ENCODE measurements at regions of chr12 and their contacts with region 1.

Region 1: GRCh38 chr12:8544295-8544694 is 3.6 kb upstream of the CLEC4E start:
- DNase-seq: peak; percentile 90
- H3K4me3 Mint-ChIP-seq: no peak overlapping the region
- H3K27ac Mint-ChIP-seq: no peak overlapping the region
- H3K4me1 Mint-ChIP-seq: peaks cover 12% of the 10 kb centered on the region
- H3K27me3 Mint-ChIP-seq: peaks cover 23% of the 10 kb centered on the region

Region 2: GRCh38 chr12:8527250-8528130 is 16.8 kb before region 1 on chr12:
- CTCF ChIA-PET with region 1: interaction called, 26 read pairs
- intact Hi-C with region 1: no loop called
- DNase-seq: no peak
- H3K4me3 Mint-ChIP-seq: no peak overlapping the region
- H3K27ac Mint-ChIP-seq: no peak overlapping the region
- H3K4me1 Mint-ChIP-seq: no peaks in the 10 kb centered on the region
- H3K27me3 Mint-ChIP-seq: peaks cover 27% of the 10 kb centered on the region

Region 3: GRCh38 chr12:8562310-8562709 is 18.0 kb after region 1 on chr12:
- CTCF ChIA-PET with region 1: interaction called, 18 read pairs
- intact Hi-C with region 1: loop called (anchors 2 kb)
- DNase-seq: no peak
- H3K4me3 Mint-ChIP-seq: no peak overlapping the region
- H3K27ac Mint-ChIP-seq: no peak overlapping the region
- H3K4me1 Mint-ChIP-seq: no peaks in the 10 kb centered on the region
- H3K27me3 Mint-ChIP-seq: peaks cover 7% of the 10 kb centered on the region

Region 4: DNA sequence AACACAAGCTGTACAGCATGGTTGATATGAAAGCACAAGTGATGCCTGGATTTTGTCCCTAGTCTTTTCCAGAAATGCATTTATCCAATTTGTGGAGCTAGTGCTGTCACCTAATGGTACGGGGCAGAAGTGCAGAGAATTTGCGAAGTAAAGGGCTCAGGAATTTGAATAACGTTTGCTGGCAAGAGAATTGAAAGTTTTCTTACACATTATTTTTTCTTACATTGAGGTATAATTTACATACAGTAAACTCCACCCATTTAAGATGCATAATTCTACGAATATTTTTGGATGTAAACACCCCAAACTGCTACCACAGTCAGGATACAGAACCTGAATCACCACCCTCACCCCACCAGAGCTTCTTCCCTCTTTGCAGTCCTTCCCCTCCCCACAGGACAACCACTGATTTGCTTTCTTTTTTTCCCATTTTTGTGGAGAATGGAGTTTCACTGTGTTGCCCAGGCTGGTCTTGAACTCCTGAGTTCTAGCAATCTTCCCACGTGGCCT is 64.8 kb after region 1 on chr12:
- CTCF ChIA-PET with region 1: interaction called, 27 read pairs
- intact Hi-C with region 1: loop called (anchors 1 kb)
- DNase-seq: peak; percentile 38
- H3K4me3 Mint-ChIP-seq: no peak overlapping the region
- H3K27ac Mint-ChIP-seq: no peak overlapping the region
- H3K4me1 Mint-ChIP-seq: peaks cover 10% of the 10 kb centered on the region
- H3K27me3 Mint-ChIP-seq: peaks cover 3% of the 10 kb centered on the region

Region 5: DNA sequence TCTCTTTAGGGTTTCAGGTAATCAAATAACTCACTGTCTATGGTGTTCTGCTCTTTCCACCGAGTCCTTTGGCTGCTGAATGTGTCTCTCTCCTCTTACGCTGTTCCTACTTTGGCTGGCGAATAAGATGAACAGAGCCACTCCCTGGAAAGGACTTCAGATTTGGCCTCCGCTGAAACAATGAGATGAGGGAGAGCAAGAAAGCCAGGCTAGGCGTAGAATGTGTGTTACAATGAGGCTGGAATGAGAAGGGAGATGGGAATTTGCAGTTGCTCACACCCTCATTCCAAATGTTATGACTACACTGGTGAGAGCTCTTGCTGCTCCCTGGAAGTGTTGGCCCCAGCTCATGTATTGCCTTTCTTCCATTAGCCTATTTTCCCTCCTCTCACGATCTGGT is 118.3 kb after region 1 on chr12 and contains the start of gene MFAP5:
- CTCF ChIA-PET with region 1: interaction called, 5 read pairs
- intact Hi-C with region 1: loop called (anchors 1 kb)
- DNase-seq: no peak
- H3K4me3 Mint-ChIP-seq: no peak within 1 kb of the TSS
- H3K27ac Mint-ChIP-seq: no peak within 1 kb of the TSS
- H3K4me1 Mint-ChIP-seq: no peaks in the 10 kb centered on the region
- H3K27me3 Mint-ChIP-seq: peaks cover 5% of the 10 kb centered on the region
- total RNA-seq, gene MFAP5: not detected

Region 6: GRCh38 chr12:8890313-8891085 is 346.2 kb after region 1 on chr12:
- CTCF ChIA-PET with region 1: interaction called, 18 read pairs
- intact Hi-C with region 1: loop called (anchors 1 kb)
- DNase-seq: peak; percentile 78
- H3K4me3 Mint-ChIP-seq: peak overlapping the region; percentile 82
- H3K27ac Mint-ChIP-seq: no peak overlapping the region
- H3K4me1 Mint-ChIP-seq: peaks cover 5% of the 10 kb centered on the region
- H3K27me3 Mint-ChIP-seq: no peaks in the 10 kb centered on the region

Region 7: GRCh38 chr12:9134981-9135628 is 590.8 kb after region 1 on chr12:
- CTCF ChIA-PET with region 1: no interaction called
- intact Hi-C with region 1: no loop called
- DNase-seq: peak; percentile 16
- H3K4me3 Mint-ChIP-seq: no peak overlapping the region
- H3K27ac Mint-ChIP-seq: no peak overlapping the region
- H3K4me1 Mint-ChIP-seq: no peaks in the 10 kb centered on the region
- H3K27me3 Mint-ChIP-seq: no peaks in the 10 kb centered on the region

Measured in activated naive CD4-positive, alpha-beta T cell treated with anti-CD3 and anti-CD28 coated beads for 36 hours (primary cell).